ENCODE measurements at regions of chr12 and their contacts with region 1.

Region 1: GRCh38 chr12:12182703-12183365 is 84.0 kb downstream of the LRP6 start:
- DNase-seq: peak; percentile 7
- H3K4me3 Mint-ChIP-seq: no peak overlapping the region
- H3K27ac Mint-ChIP-seq: peak overlapping the region; percentile 50
- H3K4me1 Mint-ChIP-seq: peaks cover 64% of the 10 kb centered on the region
- H3K27me3 Mint-ChIP-seq: no peaks in the 10 kb centered on the region
- CTCF ChIP-seq: no peak

Region 2: GRCh38 chr12:12214635-12215131 is 31.8 kb after region 1 on chr12:
- CTCF ChIA-PET with region 1: no interaction called
- intact Hi-C with region 1: loop called (anchors 2 kb)
- DNase-seq: peak; percentile 7
- H3K4me3 Mint-ChIP-seq: peak overlapping the region; percentile 29
- H3K27ac Mint-ChIP-seq: peak overlapping the region; percentile 63
- H3K4me1 Mint-ChIP-seq: peaks cover 92% of the 10 kb centered on the region
- H3K27me3 Mint-ChIP-seq: no peaks in the 10 kb centered on the region
- CTCF ChIP-seq: no peak

Region 3: DNA sequence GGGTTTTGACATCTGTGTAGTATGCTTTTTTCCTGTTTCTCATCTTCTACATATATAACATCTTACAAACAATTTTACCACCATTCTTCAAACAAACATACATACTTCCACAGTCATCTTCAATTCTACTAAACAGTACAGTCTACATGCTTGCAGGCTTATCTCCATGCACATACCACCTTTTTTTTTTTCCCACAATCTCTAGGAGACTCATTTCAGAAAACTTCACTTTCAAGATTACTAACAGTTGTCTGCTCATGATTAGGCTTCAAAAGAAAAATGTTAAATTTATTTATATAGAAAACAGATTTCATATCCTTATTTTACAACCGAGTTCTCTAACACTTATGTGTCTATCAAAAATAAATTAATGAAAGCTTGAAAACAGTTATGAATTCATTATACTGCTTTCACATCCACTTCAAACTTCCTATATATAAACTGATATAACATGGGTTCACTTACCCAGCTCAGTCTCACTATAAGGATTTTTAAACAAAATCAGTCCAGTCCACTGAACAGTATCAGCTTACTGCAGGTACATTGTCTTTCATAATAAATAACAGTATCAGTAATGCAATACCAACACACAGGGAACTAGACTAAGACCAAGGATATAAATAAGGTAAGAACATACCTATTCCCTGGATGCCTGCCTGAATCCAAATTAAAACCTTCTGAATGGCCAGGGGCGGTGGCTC is 41.6 kb after region 1 on chr12:
- CTCF ChIA-PET with region 1: no interaction called
- intact Hi-C with region 1: loop called (anchors 5 kb)
- DNase-seq: no peak
- H3K4me3 Mint-ChIP-seq: no peak overlapping the region
- H3K27ac Mint-ChIP-seq: no peak overlapping the region
- H3K4me1 Mint-ChIP-seq: peaks cover 50% of the 10 kb centered on the region
- H3K27me3 Mint-ChIP-seq: no peaks in the 10 kb centered on the region
- CTCF ChIP-seq: no peak

Measured in Calu3 (cell line).